GM10248 (cell line): ENCODE measurements at regions of chr17 and their contacts with region 1.

Region 1: DNA sequence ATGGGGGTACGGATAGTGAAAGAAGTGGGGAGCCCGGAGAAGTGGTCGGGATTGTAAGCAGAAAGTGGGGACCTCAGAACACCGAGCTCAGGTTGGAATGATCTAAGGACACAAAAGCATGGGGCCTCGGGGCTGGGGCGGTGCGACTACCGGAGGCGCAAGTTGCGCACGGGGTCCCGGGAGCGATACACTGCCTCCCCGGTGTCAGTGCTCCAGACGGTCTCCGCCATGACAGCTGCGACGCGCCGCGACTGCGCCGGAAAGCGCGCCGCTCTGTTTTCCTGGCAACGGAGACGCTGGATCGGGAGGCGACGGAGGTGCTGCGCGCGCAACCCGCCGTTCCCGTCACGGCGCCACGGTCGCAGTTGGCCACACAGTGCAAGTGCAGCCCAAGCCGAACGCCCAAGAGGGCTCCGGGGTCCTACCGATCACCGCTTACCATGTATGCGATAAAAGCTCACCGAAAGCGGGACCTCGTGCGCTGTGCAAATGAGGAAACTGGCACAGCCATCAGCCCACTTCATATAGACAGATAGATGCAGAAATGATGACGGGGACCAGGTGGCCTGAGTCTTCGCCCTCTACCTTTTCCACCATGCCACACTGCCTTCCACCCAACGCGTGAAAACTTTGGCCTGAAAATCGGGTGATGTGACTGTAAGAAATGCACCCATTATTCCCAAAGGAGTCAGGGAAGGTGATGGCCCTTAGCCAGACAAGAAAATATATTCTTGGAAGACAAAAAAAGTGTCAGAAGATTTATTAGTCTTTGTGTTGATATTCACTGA is at the start of gene MKS1:
- DNase-seq: peak; percentile 99
- CTCF ChIP-seq: peak; percentile 72

Region 2: GRCh38 chr17:58232707-58233156 is 13.5 kb after region 1 on chr17:
- CTCF ChIA-PET with region 1: interaction called, 52 read pairs
- POLR2A ChIA-PET with region 1: no interaction called
- DNase-seq: peak; percentile 76
- CTCF ChIP-seq: no peak